Gastrocnemius medialis (tissue), 4 donors: ENCODE measurements at regions of chr7 and their contacts with region 1.

Region 1: DNA sequence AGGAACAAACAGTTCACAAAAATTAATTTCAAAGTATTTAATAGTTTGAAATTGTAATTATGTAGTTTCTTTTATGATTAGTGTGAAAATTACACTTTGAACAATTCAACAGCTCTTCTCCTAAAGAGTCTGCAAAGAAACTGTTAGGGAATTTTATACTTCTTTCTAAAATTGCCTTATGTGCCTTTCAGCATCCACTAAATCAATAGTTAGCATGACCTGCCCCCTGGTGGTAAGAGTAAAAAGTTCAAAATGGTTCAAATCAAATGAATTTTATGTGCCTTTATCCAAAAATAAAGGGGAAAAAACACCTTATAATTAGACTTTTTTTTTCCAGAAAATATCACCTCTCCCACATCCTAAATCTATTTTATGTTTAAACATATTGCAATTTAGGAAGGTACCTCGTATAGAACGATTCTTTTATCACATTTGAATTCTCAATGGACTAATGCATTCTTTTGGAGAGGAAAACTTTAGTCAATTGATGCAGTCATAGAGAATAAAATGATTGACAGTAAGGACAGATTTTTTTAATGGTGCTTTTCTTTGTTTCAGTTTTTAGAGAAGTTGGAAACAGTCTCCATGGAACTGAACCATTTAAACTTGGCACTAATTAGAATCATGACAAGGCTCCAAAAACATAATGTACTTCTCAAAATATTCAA is 163.7 kb downstream of the SEMA3D start:
- DNase-seq: no peak
- ATAC-seq: no peak
- H3K4me3 ChIP-seq: no peak overlapping the region
- H3K27ac ChIP-seq: no peak overlapping the region
- H3K4me1 ChIP-seq: no peaks in the 10 kb centered on the region
- H3K27me3 ChIP-seq: no peaks in the 10 kb centered on the region
- CTCF ChIP-seq: peak; percentile 42 to 66 (median 55)
- POLR2A ChIP-seq: no peak

Region 2: DNA sequence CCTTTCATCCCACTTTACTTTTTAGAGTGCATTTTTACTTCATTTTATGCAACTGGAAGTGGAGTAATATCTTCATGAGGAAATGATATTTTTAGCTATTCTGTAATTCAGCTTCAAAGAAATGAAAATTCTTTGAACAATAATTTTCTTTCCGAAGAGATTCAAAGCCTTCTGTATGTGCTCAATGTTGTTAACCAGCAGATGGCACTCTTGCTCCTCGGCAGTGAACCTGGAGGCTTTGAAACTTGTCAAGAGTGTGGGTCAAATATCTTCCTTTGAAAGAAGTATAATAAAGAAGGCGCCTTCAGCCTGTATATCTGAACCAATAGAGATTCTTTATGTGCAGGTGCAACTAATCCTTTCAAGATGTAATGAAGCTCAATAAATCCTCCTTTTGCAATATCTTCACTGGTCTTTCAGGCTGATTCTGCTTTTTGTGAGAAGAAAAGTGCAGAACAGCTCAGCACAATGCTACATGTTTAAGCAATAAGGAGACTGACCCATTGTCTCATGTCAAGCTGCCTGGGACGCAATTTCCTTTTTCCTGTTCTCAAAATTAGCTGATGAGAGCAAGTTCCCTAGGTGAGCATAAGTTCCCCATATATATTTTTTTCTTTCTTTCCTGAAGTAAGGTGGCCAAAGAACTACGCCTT is 1087.0 kb before region 1 on chr7:
- in situ Hi-C with region 1: no loop called
- intact Hi-C with region 1: loop called (anchors 5 kb)
- DNase-seq: peak in 1 of 2 donors; percentile 14
- ATAC-seq: peak in 1 of 2 donors; percentile 72
- H3K4me3 ChIP-seq: no peak overlapping the region
- H3K27ac ChIP-seq: no peak overlapping the region
- H3K4me1 ChIP-seq: no peaks in the 10 kb centered on the region
- H3K27me3 ChIP-seq: no peaks in the 10 kb centered on the region
- CTCF ChIP-seq: peak in 4 of 5 experiments; percentile 35 to 70 (median 53)
- POLR2A ChIP-seq: no peak

Region 3: GRCh38 chr7:83957333-83957732 is 1065.8 kb before region 1 on chr7:
- in situ Hi-C with region 1: loop called in 2 of 4 experiments (anchors 25 kb)
- intact Hi-C with region 1: no loop called
- DNase-seq: no peak
- ATAC-seq: no peak
- H3K4me3 ChIP-seq: no peak overlapping the region
- H3K27ac ChIP-seq: no peak overlapping the region
- H3K4me1 ChIP-seq: no peaks in the 10 kb centered on the region
- H3K27me3 ChIP-seq: no peaks in the 10 kb centered on the region
- CTCF ChIP-seq: no peak
- POLR2A ChIP-seq: no peak

Region 4: GRCh38 chr7:83976295-83976694 is 1046.9 kb before region 1 on chr7:
- in situ Hi-C with region 1: loop called (anchors 5 to 25 kb)
- intact Hi-C with region 1: no loop called
- DNase-seq: no peak
- ATAC-seq: no peak
- H3K4me3 ChIP-seq: no peak overlapping the region
- H3K27ac ChIP-seq: no peak overlapping the region
- H3K4me1 ChIP-seq: no peaks in the 10 kb centered on the region
- H3K27me3 ChIP-seq: no peaks in the 10 kb centered on the region
- CTCF ChIP-seq: peak; percentile 19 to 52 (median 45)
- POLR2A ChIP-seq: no peak

Region 5: DNA sequence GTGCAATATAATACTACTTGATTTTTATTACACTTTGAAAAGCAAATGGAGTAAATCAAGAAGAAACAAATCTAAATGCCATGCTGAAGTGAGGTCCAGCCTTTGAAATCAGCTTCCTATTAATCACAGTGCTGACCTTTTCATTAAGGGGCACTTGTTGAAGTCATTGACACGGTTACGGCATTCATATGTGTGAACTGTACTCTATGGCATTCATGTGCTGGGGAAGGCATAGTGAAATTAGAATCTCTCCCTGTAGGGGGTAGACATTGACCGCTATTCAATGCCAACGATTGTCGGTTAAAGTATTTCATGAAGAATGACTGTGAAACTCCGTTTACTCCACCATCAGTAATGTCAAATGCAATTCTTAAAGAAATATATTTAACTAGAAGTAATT is 532.5 kb before region 1 on chr7:
- in situ Hi-C with region 1: loop called in 3 of 4 experiments (anchors 10 to 25 kb)
- intact Hi-C with region 1: no loop called
- DNase-seq: no peak
- ATAC-seq: peak in 1 of 2 donors; percentile 39
- H3K4me3 ChIP-seq: no peak overlapping the region
- H3K27ac ChIP-seq: no peak overlapping the region
- H3K4me1 ChIP-seq: no peaks in the 10 kb centered on the region
- H3K27me3 ChIP-seq: no peaks in the 10 kb centered on the region
- CTCF ChIP-seq: no peak
- POLR2A ChIP-seq: no peak

Region 6: DNA sequence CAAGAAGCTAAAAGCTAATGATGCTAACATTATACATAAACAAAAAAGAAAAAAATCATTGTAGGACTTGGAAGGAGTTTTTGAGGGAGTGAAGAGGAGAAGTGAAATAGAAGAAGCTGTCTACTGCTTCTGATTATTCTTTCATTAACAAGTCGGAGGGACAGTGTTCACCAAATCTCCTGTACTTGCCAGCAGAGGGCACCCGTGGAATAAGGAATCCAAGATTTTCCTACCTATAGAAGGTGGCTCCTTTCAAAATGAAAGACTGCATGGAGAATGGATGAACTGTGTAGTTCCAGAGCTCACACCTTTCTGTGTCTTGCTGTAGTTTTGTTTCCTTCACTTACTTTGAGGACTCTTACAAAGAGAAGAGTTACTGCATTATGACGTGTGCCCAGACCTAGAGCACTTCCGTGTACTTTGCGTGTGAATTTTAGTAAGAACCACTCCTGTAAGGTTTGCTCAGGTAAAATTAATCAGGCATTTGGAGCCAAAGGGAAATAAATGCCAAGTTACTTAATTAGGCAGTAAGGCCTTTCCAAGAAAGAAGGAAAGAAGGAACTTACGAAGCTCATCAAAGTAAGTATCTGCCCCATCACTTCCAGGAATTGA is 18.5 kb after region 1 on chr7:
- in situ Hi-C with region 1: no loop called
- intact Hi-C with region 1: no loop called
- DNase-seq: peak in 1 of 2 donors; percentile 17
- ATAC-seq: no peak
- H3K4me3 ChIP-seq: no peak overlapping the region
- H3K27ac ChIP-seq: no peak overlapping the region
- H3K4me1 ChIP-seq: no peaks in the 10 kb centered on the region
- H3K27me3 ChIP-seq: no peaks in the 10 kb centered on the region
- CTCF ChIP-seq: peak in 4 of 5 experiments; percentile 6 to 44 (median 38)
- POLR2A ChIP-seq: no peak

Region 7: DNA sequence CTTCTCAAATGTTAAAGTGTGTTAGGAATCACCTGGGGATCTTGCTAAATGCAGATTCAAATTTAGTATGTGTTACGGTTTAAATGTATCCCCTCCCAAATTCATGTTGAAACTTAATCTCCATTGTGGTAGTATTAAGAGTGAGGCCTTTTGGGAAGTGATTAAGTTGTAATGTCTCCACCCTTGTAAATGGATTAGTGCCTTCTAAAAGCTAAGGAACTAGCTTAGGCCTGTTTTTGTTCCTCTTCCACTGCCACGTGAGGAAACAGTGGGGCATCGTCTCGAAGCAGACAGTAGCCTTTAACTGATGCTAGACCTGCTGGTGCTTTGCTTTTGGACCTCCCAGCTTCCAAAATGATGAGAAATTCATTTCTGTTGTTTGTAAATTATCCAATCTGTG is 215.9 kb after region 1 on chr7:
- in situ Hi-C with region 1: no loop called
- intact Hi-C with region 1: no loop called
- DNase-seq: no peak
- ATAC-seq: no peak
- H3K4me3 ChIP-seq: no peak overlapping the region
- H3K27ac ChIP-seq: no peak overlapping the region
- H3K4me1 ChIP-seq: no peaks in the 10 kb centered on the region
- H3K27me3 ChIP-seq: no peaks in the 10 kb centered on the region
- CTCF ChIP-seq: no peak
- POLR2A ChIP-seq: no peak